ENCODE measurements at regions of chr12 and their contacts with region 1.

Region 1: DNA sequence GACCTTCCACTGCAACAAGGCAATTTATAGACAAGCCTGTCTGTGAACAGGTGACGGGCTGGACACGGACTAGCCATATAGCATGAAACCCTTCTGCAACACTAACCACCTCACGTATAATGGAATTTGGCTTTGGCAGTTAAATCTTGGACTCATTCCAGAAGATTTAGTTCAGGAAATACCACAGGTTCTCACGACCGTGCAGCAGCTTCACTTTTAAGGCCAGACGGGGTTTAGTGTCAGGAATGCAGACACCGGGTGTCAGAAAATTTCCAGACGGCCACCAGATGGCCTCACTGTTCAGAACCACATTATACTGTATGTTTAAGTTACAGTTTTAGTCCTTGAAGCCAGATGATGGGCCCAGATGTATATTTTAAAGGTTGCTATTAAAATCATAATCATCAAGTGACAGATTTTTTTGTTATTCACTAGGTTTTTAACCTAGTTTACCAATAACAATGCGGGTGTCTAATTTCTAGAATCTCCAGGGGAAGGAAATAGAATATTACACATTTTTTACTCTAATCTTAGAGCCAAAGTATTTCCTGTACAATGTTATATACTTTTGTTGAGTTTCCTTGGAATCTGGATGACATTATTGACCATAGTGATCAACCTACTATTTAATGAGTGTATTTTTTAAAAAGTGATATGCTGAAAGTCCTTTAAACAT is 90.5 kb upstream of the TMPO start:
- DNase-seq: peak; percentile 76
- H3K4me3 Mint-ChIP-seq: no peak overlapping the region
- H3K27ac Mint-ChIP-seq: no peak overlapping the region
- H3K4me1 Mint-ChIP-seq: peaks cover 4% of the 10 kb centered on the region
- H3K27me3 Mint-ChIP-seq: no peaks in the 10 kb centered on the region

Region 2: DNA sequence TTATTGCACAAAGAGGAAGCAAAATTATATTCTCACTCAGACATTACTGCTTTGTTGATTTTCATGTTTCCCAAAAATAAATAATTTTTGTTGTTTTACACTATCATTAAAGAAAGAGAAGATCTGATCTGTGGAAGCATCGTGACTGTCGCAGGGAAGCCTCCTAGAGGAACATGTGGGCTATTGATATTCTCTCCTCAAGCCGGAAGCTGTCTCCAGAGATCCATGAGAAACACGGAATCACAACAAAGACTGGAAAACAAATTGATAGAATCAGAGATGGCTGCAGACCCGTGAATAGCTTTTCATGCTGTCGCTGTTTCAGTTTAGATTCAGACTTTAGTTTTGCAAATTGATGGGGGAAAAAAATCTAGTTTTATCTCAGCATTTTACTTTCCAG is 144.7 kb before region 1 on chr12:
- CTCF ChIA-PET with region 1: no interaction called
- intact Hi-C with region 1: no loop called
- DNase-seq: no peak
- H3K4me3 Mint-ChIP-seq: no peak overlapping the region
- H3K27ac Mint-ChIP-seq: no peak overlapping the region
- H3K4me1 Mint-ChIP-seq: no peaks in the 10 kb centered on the region
- H3K27me3 Mint-ChIP-seq: peaks cover 2% of the 10 kb centered on the region

Region 3: GRCh38 chr12:98490501-98491453 is 65.9 kb after region 1 on chr12:
- CTCF ChIA-PET with region 1: interaction called, 4 read pairs
- intact Hi-C with region 1: loop called (anchors 5 kb)
- DNase-seq: peak; percentile 91
- H3K4me3 Mint-ChIP-seq: peak overlapping the region; percentile 59
- H3K27ac Mint-ChIP-seq: peak overlapping the region; percentile 87
- H3K4me1 Mint-ChIP-seq: peaks cover 4% of the 10 kb centered on the region
- H3K27me3 Mint-ChIP-seq: no peaks in the 10 kb centered on the region

Region 4: DNA sequence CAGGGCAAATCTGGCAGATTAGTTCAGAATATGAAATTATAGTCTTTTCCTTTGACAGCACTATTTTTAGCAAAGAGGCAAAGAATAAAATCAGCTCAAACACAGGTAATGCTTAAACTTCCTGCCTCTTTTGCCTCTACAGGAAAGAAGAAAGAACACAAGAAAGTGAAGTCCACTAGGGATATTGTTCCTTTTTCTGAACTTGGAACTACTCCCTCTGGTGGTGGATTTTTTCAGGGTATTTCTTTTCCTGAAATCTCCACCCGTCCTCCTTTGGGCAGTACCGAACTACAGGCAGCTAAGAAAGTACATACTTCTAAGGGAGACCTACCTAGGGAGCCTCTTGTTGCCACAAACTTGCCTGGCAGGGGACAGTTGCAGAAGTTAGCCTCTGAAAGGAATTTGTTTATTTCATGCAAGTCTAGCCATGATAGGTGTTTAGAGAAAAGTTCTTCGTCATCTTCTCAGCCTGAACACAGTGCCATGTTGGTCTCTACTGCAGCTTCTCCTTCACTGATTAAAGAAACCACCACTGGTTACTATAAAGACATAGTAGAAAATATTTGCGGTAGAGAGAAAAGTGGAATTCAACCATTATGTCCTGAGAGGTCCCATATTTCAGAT is 107.9 kb after region 1 on chr12:
- CTCF ChIA-PET with region 1: no interaction called
- intact Hi-C with region 1: loop called (anchors 1 kb)
- DNase-seq: no peak
- H3K4me3 Mint-ChIP-seq: no peak overlapping the region
- H3K27ac Mint-ChIP-seq: no peak overlapping the region
- H3K4me1 Mint-ChIP-seq: peaks cover 14% of the 10 kb centered on the region
- H3K27me3 Mint-ChIP-seq: no peaks in the 10 kb centered on the region

Region 5: DNA sequence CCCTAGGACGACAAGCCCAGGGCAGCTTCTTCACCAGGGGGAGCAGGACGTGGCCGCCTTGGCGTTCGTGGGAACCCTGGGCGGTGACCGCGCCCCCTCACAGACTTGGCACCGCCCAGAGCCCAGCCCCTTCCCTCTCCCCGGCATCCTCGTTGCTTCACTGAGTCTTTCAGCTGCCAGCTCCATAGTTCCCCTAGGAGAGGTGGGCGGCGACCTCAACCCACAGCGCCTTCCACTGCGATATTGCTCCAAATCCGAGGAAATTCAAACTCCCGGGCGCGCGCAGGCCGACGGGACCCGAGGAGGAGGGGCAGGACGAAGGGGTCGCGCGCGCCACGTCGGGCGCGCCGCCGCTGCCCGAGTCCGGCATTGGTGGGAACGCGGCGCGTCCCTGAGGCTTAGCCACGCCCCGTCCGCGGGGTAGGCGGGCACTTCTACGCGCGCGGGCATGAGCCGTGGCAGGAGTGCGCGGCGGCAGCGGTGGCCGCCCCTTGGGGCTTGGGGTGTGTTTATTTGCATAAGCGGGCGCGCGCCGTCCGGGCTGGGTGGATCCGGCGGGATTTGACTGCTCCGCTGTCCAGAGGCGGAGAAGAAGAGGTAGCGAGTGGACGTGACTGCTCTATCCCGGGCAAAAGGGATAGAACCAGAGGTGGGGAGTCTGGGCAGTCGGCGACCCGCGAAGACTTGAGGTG is 220.0 kb after region 1 on chr12 and contains the starts of genes APAF1 and IKBIP:
- CTCF ChIA-PET with region 1: no interaction called
- intact Hi-C with region 1: loop called (anchors 2 kb)
- DNase-seq: peak; percentile 97
- H3K4me3 Mint-ChIP-seq: peak within 1 kb of the TSS; percentile 96
- H3K27ac Mint-ChIP-seq: peak within 1 kb of the TSS; percentile 95
- H3K4me1 Mint-ChIP-seq: peaks cover 24% of the 10 kb centered on the region
- H3K27me3 Mint-ChIP-seq: no peaks in the 10 kb centered on the region
- total RNA-seq, gene APAF1: 13.6 to 14.5 TPM
- total RNA-seq, gene IKBIP: 14.5 to 16.8 TPM

Region 6: DNA sequence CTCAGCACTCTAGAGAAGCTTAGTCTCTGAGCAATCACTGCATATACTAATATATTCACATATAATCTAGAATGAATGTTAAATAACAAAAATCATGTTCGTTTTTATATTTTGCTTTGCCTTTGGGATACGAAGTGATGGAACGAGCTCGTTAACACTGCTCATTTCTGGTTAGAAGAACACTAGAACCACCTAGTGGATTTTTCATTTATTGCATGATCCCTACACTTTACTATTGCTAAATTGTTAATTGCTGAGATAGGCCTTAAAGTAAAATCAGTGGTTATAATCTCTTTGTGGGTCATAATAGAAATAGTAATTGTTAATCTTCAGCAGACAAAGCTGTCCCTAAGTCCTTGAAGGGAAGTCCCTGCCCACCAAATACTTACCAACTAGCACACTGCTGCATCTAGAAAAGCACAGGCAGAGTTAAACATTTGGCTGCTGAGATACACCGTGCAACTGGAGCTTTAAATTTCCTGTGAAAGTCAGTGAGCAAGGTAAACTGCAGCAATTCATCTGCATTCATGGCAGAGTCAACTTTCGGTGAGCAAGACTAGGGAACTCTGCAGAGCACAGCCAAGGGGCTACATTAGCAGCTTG is 573.9 kb after region 1 on chr12:
- CTCF ChIA-PET with region 1: no interaction called
- intact Hi-C with region 1: loop called (anchors 1 kb)
- DNase-seq: no peak
- H3K4me3 Mint-ChIP-seq: no peak overlapping the region
- H3K27ac Mint-ChIP-seq: no peak overlapping the region
- H3K4me1 Mint-ChIP-seq: no peaks in the 10 kb centered on the region
- H3K27me3 Mint-ChIP-seq: no peaks in the 10 kb centered on the region

Measured in activated naive CD4-positive, alpha-beta T cell treated with anti-CD3 and anti-CD28 coated beads for 36 hours (primary cell).